ENCODE measurements at regions of chr17 and their contacts with region 1.

Region 1: DNA sequence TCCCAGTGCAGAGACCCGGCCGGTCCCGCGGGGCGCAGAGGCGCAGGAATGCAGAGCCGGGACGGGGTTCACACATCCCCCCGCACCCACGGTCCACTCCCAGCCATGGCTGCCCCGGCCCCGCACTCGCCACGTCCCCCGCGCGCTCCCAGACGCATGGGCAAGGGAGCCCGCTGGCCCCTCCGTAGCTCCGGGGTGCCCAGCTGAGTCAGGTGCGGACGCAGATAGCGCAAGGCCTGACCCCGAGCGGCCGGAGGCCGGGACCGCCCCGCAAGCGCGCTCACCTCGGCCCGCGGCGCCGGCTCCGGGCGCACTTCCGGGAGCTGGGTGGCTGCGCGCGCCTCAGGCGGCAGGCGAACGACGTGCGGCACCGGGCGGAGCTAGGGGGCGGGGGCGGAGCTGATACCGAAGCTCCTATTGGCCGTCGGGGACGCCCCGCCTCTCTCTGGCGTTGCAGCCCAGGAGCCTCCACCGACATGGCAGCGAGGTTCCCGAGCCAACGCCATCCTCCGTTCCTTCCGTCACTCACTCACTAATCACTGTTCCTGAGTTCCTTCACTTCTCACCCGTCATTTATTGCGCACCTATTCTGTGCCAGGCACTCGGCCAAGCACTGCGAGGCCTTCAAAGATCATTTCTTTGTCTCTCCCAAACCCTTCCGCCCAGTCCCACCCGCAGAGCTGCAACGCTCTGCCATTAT is at the start of gene ZNF18:
- DNase-seq: peak; percentile 94
- H3K4me3 Mint-ChIP-seq: peak within 1 kb of the TSS; percentile 94
- H3K27ac Mint-ChIP-seq: peak within 1 kb of the TSS; percentile 92
- H3K4me1 Mint-ChIP-seq: peaks cover 14% of the 10 kb centered on the region
- H3K27me3 Mint-ChIP-seq: peaks cover under 1% of the 10 kb centered on the region
- total RNA-seq, gene ZNF18: 7.7 and 11.0 TPM in 2 replicates

Region 2: GRCh38 chr17:12007466-12007865 is 10.2 kb after region 1 on chr17:
- intact Hi-C with region 1: no loop called
- DNase-seq: no peak
- H3K4me3 Mint-ChIP-seq: no peak overlapping the region
- H3K27ac Mint-ChIP-seq: no peak overlapping the region
- H3K4me1 Mint-ChIP-seq: no peaks in the 10 kb centered on the region
- H3K27me3 Mint-ChIP-seq: peaks cover 14% of the 10 kb centered on the region

Region 3: GRCh38 chr17:12020642-12021622 is 23.6 kb after region 1 on chr17 and contains the start of gene MAP2K4:
- intact Hi-C with region 1: loop called (anchors 1 kb)
- DNase-seq: peak; percentile 91
- H3K4me3 Mint-ChIP-seq: peak within 1 kb of the TSS; percentile 86
- H3K27ac Mint-ChIP-seq: peak within 1 kb of the TSS; percentile 73
- H3K4me1 Mint-ChIP-seq: peaks cover 41% of the 10 kb centered on the region
- H3K27me3 Mint-ChIP-seq: peaks cover 18% of the 10 kb centered on the region
- total RNA-seq, gene MAP2K4: 33.3 and 34.7 TPM in 2 replicates

Region 4: GRCh38 chr17:12107905-12108304 is 110.6 kb after region 1 on chr17:
- intact Hi-C with region 1: loop called (anchors 10 kb)
- DNase-seq: no peak
- H3K4me3 Mint-ChIP-seq: no peak overlapping the region
- H3K27ac Mint-ChIP-seq: no peak overlapping the region
- H3K4me1 Mint-ChIP-seq: no peaks in the 10 kb centered on the region
- H3K27me3 Mint-ChIP-seq: no peaks in the 10 kb centered on the region

Region 5: DNA sequence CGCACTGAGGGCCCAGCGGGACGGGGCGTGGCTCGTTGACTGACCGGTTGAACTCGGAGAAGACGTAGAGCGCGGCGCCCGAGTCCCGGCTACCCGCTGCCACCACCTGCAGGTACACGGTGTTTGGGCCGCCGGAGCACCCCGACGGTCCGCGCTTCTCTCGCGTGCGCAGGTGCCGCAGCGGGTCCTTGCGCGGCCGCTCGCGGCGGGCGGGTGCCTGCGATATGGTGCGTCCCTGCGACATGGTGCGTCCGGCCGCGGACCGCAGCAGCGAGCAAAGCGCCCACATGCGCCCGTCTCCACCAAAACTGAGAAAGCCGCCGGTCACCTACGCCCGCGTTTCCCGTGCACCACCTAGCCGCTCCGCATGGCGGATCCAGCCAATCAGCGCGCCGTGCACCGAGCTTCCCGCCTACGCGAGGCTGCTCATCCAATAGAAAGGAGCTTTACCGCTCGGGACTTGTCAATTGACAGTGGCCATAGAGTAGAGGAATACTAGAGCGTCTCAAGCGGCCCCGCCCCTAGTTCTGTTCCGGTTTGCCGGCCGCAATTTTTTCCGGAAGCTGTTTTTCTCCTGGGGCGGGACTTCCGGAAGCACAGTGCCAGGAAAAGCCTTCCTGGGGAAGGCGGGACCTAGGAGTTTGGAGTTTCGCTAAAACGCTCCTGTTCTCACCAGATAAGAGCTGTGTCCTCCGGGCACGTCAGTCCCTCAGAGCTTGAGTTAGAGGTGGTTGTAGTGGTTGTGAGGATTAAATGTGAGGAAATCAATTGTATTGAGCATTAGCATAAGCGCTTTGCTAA is 1020.6 kb after region 1 on chr17 and contains the start of gene ELAC2:
- intact Hi-C with region 1: loop called (anchors 2 kb)
- DNase-seq: peak; percentile 97
- H3K4me3 Mint-ChIP-seq: peak within 1 kb of the TSS; percentile 96
- H3K27ac Mint-ChIP-seq: peak within 1 kb of the TSS; percentile 96
- H3K4me1 Mint-ChIP-seq: peaks cover 42% of the 10 kb centered on the region
- H3K27me3 Mint-ChIP-seq: no peaks in the 10 kb centered on the region
- total RNA-seq, gene ELAC2: 96.9 and 98.7 TPM in 2 replicates

Measured in activated T-helper 1 cell treated with anti-CD3 and anti-CD28 coated beads, Interleukin-12 subunit alpha, Interleukin-12 subunit beta, Interleukin-2, Interleukin-4 antibody, amounts not matched to agents 30 ng/mL and 10 ng/mL and 1 ng/mL, durations not matched to agents 14 hours and 24 hours and 36 hours (primary cell).